ENCODE measurements at regions of chr10 and their contacts with region 1.

Region 1: GRCh38 chr10:55287346-55287745 is 486.3 kb upstream of the PCDH15 start:
- DNase-seq: no peak
- ATAC-seq: no peak
- H3K4me3 Mint-ChIP-seq: no peak overlapping the region
- H3K27ac Mint-ChIP-seq: no peak overlapping the region
- H3K4me1 Mint-ChIP-seq: no peaks in the 10 kb centered on the region
- H3K27me3 Mint-ChIP-seq: no peaks in the 10 kb centered on the region
- CTCF ChIP-seq: no peak

Region 2: GRCh38 chr10:55224007-55224781 is 63.2 kb before region 1 on chr10:
- CTCF ChIA-PET with region 1: no interaction called
- POLR2A ChIA-PET with region 1: no interaction called
- intact Hi-C with region 1: loop called (anchors 10 kb)
- DNase-seq: no peak
- ATAC-seq: no peak
- H3K4me3 Mint-ChIP-seq: no peak overlapping the region
- H3K27ac Mint-ChIP-seq: no peak overlapping the region
- H3K4me1 Mint-ChIP-seq: no peaks in the 10 kb centered on the region
- H3K27me3 Mint-ChIP-seq: no peaks in the 10 kb centered on the region
- CTCF ChIP-seq: no peak

Measured in activated B cell treated with CpG ODN at 0.5 μM for 24 hours (primary cell).